Activated CD8-positive, alpha-beta T cell treated with anti-CD3 and anti-CD28 coated beads for 36 hours (primary cell): ENCODE measurements at regions of chr10 and their contacts with region 1.

Region 1: DNA sequence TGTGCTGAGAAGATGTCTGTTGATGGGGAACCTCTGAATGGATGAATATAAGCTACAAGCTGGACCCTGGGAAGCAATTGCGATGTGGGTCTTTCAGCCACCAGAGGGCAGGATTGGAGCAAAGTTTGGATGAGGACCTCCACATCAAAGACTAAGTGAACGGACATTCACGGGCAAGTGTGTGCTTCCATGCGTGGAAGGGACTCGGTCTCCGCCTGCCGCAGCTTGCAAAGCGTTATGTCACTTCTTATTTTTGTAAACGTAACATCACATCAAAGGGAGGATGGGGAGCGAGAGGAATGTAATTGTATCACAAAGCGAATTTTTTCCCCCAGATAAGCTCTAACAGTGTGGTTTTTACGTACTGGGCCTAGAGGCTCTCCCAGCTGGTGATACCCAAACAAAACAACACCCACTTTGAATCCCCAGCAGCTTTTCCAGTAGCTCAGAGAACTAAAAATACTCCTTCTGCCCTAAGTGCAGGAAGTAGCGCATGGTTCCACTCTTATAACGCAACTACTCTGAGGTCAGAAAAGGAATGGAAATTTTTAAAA is 65.0 kb downstream of the VWA2 start:
- DNase-seq: peak; percentile 92
- ATAC-seq: peak; percentile 72
- H3K4me3 Mint-ChIP-seq: peak overlapping the region; percentile 86
- H3K27ac Mint-ChIP-seq: peak overlapping the region; percentile 89
- H3K4me1 Mint-ChIP-seq: peaks cover 13% of the 10 kb centered on the region
- H3K27me3 Mint-ChIP-seq: no peaks in the 10 kb centered on the region
- CTCF ChIP-seq: peak; percentile 62

Region 2: GRCh38 chr10:113897693-113898618 is 406.1 kb before region 1 on chr10:
- CTCF ChIA-PET with region 1: no interaction called
- POLR2A ChIA-PET with region 1: no interaction called
- intact Hi-C with region 1: no loop called
- DNase-seq: no peak
- ATAC-seq: no peak
- H3K4me3 Mint-ChIP-seq: no peak overlapping the region
- H3K27ac Mint-ChIP-seq: no peak overlapping the region
- H3K4me1 Mint-ChIP-seq: no peaks in the 10 kb centered on the region
- H3K27me3 Mint-ChIP-seq: no peaks in the 10 kb centered on the region
- CTCF ChIP-seq: no peak

Region 3: GRCh38 chr10:114328874-114329273 is 24.8 kb after region 1 on chr10:
- CTCF ChIA-PET with region 1: interaction called, 20 read pairs
- POLR2A ChIA-PET with region 1: no interaction called
- intact Hi-C with region 1: no loop called
- DNase-seq: no peak
- ATAC-seq: no peak
- H3K4me3 Mint-ChIP-seq: no peak overlapping the region
- H3K27ac Mint-ChIP-seq: no peak overlapping the region
- H3K4me1 Mint-ChIP-seq: peaks cover 4% of the 10 kb centered on the region
- H3K27me3 Mint-ChIP-seq: no peaks in the 10 kb centered on the region
- CTCF ChIP-seq: no peak

Region 4: DNA sequence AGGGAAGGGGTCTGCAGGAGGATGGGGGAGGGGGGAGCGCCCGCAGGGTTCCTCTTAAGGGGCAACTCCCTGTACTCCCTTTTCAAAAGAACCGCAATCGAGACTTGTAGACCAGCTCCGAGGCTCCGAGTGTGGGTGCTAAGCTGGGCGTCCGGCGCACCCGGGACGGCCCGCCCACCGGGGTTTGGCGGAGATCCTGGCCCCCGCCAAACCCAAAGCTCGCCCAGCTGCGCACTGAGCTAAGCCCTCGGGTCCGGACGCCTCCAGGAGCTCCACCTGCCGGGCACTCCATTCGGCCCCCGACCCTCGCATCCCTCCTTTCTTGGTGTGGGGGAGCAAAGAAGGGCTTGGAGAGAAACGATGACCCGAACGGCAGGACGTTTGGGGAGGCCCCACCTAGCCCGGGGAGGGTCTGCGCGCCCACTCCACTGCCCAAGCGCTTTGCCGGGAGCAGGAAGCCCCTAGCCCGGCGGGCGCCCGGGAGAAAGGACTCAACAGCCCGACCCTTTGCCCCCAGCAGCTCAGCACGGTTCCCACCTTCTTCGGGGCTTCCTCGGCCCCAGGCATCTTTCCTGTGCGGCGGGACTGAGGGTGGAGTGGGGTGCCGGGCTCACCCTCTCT is 99.6 kb after region 1 on chr10:
- CTCF ChIA-PET with region 1: interaction called, 22 read pairs
- POLR2A ChIA-PET with region 1: no interaction called
- intact Hi-C with region 1: no loop called
- DNase-seq: peak; percentile 18
- ATAC-seq: peak; percentile 20
- H3K4me3 Mint-ChIP-seq: peak overlapping the region; percentile 34
- H3K27ac Mint-ChIP-seq: no peak overlapping the region
- H3K4me1 Mint-ChIP-seq: peaks cover 10% of the 10 kb centered on the region
- H3K27me3 Mint-ChIP-seq: peaks cover 63% of the 10 kb centered on the region
- CTCF ChIP-seq: no peak

Region 5: DNA sequence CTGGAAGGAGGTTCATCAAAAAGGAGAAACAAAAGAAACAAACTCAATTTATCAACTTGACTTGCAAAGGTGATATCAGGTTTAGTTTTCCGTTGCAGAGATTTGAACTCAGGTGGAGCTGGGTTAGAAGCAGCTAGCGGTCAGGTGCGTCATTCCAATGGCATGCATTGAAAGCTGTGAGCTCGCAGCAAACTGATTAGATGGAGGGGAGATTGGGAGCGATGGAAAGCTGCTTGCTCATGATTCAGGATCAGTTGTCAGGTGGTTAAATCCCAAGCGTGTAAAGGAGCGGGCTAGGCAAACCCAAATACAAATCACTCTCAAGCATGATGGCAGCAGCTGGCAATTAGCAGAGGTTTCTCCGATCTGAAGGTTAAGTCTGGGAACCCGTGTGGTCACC is 149.5 kb after region 1 on chr10:
- CTCF ChIA-PET with region 1: interaction called, 46 read pairs
- POLR2A ChIA-PET with region 1: no interaction called
- intact Hi-C with region 1: no loop called
- DNase-seq: no peak
- ATAC-seq: no peak
- H3K4me3 Mint-ChIP-seq: no peak overlapping the region
- H3K27ac Mint-ChIP-seq: no peak overlapping the region
- H3K4me1 Mint-ChIP-seq: peaks cover 13% of the 10 kb centered on the region
- H3K27me3 Mint-ChIP-seq: no peaks in the 10 kb centered on the region
- CTCF ChIP-seq: no peak

Region 6: DNA sequence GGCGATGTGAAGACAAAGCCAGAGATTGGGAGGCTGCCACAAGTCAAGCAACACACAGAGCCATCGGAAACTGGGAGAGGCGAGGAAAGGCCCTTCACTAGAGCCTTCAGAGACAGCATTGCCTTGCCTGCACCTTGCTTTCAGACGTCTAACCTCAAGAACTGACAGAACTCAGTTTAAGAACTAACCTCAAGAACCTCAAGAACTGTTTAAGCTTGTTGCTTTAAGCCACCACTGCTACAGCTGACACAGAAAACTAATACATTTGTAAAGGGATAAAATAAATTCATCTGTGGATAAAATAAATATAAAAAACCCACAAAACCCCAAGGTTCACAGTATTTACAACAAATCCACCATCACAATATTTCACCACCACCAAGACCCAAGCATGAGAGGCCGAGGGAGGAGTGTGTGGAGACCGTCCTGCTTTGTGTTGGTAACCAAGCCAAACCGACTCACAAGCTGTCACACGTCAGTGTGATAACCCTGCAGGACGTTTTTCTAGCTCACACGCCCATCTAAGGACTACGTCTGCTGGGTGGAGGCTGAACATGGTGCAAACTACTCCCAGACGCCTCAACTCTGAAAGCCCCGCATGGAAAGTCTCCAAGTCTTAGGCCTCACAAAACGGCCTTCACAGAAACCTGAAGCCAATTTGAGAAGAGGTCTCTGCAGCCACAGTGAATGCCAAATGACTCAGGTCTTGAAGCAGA is 237.1 kb after region 1 on chr10:
- CTCF ChIA-PET with region 1: interaction called, 24 read pairs
- POLR2A ChIA-PET with region 1: no interaction called
- intact Hi-C with region 1: loop called (anchors 5 kb)
- DNase-seq: peak; percentile 89
- ATAC-seq: peak; percentile 83
- H3K4me3 Mint-ChIP-seq: peak overlapping the region; percentile 70
- H3K27ac Mint-ChIP-seq: peak overlapping the region; percentile 100
- H3K4me1 Mint-ChIP-seq: peaks cover 87% of the 10 kb centered on the region
- H3K27me3 Mint-ChIP-seq: no peaks in the 10 kb centered on the region
- CTCF ChIP-seq: no peak

Region 7: DNA sequence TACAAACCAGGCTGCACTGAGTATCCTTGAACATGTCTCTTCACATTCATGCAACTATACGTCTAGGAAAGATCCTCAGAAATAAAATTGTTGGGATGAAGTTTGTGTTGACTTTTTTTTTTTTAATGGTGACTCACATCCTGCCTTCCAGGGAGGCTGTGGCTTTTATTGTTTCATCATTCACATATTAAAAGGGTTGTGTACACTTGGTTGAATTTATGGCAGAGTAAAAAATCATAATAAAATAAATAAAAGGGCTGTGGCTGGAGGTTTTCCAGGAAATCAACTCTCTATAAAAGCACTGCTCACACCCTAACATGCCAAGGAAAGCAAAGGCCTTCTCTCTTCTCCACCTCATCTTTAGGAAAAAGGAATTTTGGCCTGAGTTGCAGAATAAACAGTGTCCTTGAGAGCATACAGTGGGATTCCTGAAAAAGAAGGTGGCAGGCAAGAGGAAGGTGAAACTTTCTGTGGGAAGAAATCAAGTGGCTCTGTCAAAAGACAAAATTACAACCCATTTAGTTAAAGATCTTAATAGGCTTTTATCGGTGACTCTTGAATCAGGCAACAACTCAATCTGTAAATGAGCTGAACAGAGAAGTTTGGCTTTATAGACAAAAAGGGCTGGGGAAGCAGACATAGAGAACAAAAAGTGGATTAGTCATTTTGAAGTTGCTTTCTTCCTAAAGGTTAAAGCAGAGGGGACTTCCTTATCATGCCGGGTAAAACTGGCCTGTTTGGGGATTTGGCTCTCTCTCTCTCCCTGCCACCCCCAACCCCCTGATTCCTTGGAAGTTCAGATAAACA is 475.9 kb after region 1 on chr10:
- CTCF ChIA-PET with region 1: interaction called, 30 read pairs
- POLR2A ChIA-PET with region 1: no interaction called
- intact Hi-C with region 1: no loop called
- DNase-seq: no peak
- ATAC-seq: no peak
- H3K4me3 Mint-ChIP-seq: no peak overlapping the region
- H3K27ac Mint-ChIP-seq: peak overlapping the region; percentile 12
- H3K4me1 Mint-ChIP-seq: peaks cover 5% of the 10 kb centered on the region
- H3K27me3 Mint-ChIP-seq: peaks cover 2% of the 10 kb centered on the region
- CTCF ChIP-seq: no peak